GM18951 (cell line): ENCODE measurements at regions of chr3 and their contacts with region 1.

Region 1: DNA sequence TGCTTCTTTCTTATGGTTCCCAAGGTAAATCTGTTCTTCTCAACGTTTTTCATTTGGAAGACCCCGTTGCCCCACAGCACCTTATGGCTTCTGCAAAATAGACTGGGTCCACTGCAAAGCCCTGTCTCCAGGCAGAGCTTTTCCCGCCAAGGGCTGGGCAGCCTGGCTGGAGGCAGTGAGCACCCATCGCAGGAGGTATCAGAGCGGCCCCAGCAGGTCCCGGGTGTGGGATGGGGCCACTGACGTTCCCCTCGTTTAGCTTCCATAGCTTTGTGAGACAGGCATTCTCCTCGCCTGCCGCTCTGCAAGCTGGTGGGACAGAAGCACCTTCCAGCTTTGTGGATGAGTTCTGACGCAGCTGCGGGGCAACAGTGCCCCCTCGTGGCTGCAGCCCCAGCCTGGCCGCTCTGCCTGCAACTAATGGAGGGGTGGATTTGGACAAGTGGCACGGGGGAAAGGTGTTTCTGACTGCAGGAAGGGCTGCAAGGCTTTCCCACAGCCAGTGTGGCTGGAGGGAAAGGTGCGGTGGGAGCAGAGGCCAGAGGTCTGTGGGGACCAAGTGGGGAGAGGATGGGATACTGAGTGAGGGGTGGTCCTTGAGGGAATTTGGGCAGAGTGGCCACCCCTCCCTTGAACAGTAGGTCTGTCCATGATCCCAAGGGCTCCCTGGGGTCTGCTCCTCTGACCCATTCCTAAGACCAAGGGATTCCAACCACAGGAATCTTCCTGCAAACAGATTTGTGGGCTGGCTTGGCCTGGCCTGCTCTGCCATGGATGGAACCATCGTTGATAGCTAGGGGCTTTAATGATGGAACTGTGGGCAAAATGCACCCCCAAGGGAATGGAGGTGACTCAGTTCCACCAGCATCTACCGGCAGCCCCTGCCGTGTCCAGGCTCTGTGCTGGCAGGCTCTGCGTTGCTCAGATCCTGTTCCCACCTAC is 99.4 kb downstream of the FBLN2 start:
- POLR2A ChIP-seq: no peak

Region 2: GRCh38 chr3:13495921-13496723 is 152.2 kb before region 1 on chr3:
- in situ Hi-C with region 1: loop called (anchors 5 kb)
- POLR2A ChIP-seq: no peak

Region 3: GRCh38 chr3:13564751-13565560 is 83.4 kb before region 1 on chr3:
- in situ Hi-C with region 1: no loop called
- POLR2A ChIP-seq: no peak